ENCODE measurements at regions of chr5 and their contacts with region 1.

Region 1: GRCh38 chr5:53362521-53362941 is 117.9 kb upstream of the FST start:
- DNase-seq: peak in 1 of 2 donors; percentile 80
- H3K4me3 ChIP-seq: peak overlapping the region; percentile 11 to 25
- H3K27ac ChIP-seq: peak overlapping the region; percentile 40 to 51
- H3K4me1 ChIP-seq: peaks cover 0 to 22% of the 10 kb centered on the region in 2 donors
- H3K27me3 ChIP-seq: no peaks in the 10 kb centered on the region
- CTCF ChIP-seq: no peak

Region 2: GRCh38 chr5:53249529-53250200 is 112.9 kb before region 1 on chr5:
- intact Hi-C with region 1: loop called (anchors 5 kb)
- DNase-seq: peak in 1 of 2 donors; percentile 78
- H3K4me3 ChIP-seq: no peak overlapping the region
- H3K27ac ChIP-seq: peak overlapping the region; percentile 56 to 68
- H3K4me1 ChIP-seq: peaks cover 0 to 10% of the 10 kb centered on the region in 2 donors
- H3K27me3 ChIP-seq: no peaks in the 10 kb centered on the region
- CTCF ChIP-seq: no peak

Region 3: DNA sequence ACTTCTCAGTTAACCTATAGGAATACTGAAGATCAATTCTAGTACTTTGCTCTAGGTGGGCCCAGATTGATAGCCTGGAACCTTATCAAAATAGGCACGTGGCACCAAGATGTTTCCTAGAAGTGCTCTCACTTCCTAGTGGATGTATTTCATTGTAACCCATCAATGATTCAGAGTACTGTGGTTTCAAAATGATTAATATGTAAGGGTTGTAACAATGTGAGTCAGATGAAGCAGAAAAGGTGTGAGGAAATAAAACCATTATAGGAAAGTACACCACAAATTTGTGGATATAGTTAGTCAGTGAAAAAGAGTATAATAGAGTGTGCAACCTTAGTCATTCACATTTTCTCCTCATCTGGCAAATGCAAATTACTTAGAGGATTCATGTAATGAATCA is 59.4 kb before region 1 on chr5:
- intact Hi-C with region 1: loop called (anchors 1 kb)
- DNase-seq: no peak
- H3K4me3 ChIP-seq: no peak overlapping the region
- H3K27ac ChIP-seq: peak overlapping the region; percentile 37 to 58
- H3K4me1 ChIP-seq: peaks cover 0 to 6% of the 10 kb centered on the region in 2 donors
- H3K27me3 ChIP-seq: no peaks in the 10 kb centered on the region
- CTCF ChIP-seq: no peak

Region 4: GRCh38 chr5:53333160-53333559 is 29.4 kb before region 1 on chr5:
- intact Hi-C with region 1: loop called (anchors 2 kb)
- DNase-seq: no peak
- H3K4me3 ChIP-seq: no peak overlapping the region
- H3K27ac ChIP-seq: peak overlapping the region; percentile 73 to 82
- H3K4me1 ChIP-seq: peaks cover 8 to 17% of the 10 kb centered on the region in 2 donors
- H3K27me3 ChIP-seq: no peaks in the 10 kb centered on the region
- CTCF ChIP-seq: no peak

Measured in ascending aorta (tissue), 2 donors.